CD8-positive, alpha-beta T cell (primary cell): ENCODE measurements at regions of chr14 and their contacts with region 1.

Region 1: DNA sequence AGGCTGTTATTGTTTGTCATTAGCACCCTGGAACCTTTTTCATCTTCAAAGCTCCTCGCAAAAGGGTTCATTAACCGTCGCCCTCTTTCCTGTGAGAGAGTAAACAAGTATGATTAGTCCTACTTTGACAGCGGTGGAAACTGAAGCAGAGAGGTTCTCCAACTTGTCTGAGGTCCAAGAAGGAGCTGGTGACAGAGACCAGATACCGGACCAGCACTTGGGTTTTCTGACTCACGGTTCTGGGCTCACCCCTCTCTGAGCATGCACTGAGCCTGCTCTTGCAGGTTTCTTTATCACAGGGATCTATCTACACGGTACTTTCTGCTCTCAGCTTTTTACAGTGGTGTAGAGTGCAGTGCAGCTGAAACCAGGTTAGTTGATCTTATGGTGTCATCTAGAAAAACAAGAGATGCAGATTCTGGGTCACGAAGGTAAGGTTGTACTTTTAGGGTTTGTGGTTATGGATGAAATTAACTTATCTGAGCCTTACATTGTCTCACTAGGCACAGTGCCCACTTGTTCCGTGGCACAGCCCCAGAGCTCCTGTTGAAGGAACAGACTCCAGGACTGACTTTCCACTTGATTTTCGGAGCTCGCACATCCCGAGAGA is 62.1 kb downstream of the PPP2R5C start:
- DNase-seq: peak in 8 of 9 experiments; percentile 58 to 89 (median 75)
- ATAC-seq: peak; percentile 61
- H3K4me3 ChIP-seq: peak overlapping the region; percentile 60 to 61
- H3K4me3 Mint-ChIP-seq: peak overlapping the region; percentile 92
- H3K27ac ChIP-seq: peak overlapping the region; percentile 82 to 99
- H3K27ac Mint-ChIP-seq: peak overlapping the region; percentile 100
- H3K4me1 ChIP-seq: peaks cover 83% of the 10 kb centered on the region
- H3K4me1 Mint-ChIP-seq: peaks cover 86% of the 10 kb centered on the region
- H3K27me3 ChIP-seq: no peaks in the 10 kb centered on the region
- H3K27me3 Mint-ChIP-seq: no peaks in the 10 kb centered on the region
- CTCF ChIP-seq: no peak

Region 2: DNA sequence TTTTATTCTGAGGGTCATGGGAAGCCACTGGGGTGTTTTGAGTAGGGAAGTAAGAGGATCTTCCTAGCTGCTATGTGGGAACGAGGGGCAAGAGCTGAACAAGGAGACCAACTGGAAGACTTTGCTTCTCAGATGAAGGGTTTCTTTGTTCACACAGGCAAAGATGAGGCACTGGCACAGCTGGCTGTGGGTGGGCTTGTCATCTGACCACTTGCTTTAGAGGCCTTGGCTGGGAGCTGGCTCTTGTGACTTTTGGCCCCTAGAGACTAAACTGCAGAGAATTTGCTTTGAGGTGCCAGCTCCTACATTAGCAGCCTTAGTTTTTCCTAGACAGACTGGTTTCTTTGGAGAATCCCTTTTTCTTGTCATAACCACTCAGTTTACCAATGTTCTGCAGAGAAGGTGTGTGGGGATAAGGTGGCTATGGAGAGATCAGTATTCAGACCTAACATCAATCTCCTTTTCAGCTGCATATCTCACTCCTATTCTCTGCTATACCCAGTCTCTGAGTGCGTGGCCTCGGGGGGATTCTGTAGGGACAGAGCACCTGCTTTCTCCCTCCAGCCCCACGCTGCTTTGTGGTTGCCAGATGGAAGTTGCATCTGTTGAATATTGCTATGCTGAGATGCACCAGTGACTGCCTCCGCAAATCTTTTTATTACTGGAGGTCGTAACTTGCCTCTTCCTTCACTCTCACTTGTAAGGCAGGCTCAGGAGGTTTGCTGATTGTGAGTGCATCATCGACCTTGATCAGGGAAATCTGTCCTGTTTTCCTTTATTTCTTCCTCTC is 49.4 kb before region 1 on chr14:
- CTCF ChIA-PET with region 1: interaction called, 6 read pairs
- POLR2A ChIA-PET with region 1: interaction called, 27 read pairs
- intact Hi-C with region 1: no loop called
- DNase-seq: no peak
- ATAC-seq: no peak
- H3K4me3 ChIP-seq: no peak overlapping the region
- H3K4me3 Mint-ChIP-seq: no peak overlapping the region
- H3K27ac ChIP-seq: no peak overlapping the region
- H3K27ac Mint-ChIP-seq: peak overlapping the region; percentile 58
- H3K4me1 ChIP-seq: no peaks in the 10 kb centered on the region
- H3K4me1 Mint-ChIP-seq: peaks cover 37% of the 10 kb centered on the region
- H3K27me3 ChIP-seq: no peaks in the 10 kb centered on the region
- H3K27me3 Mint-ChIP-seq: no peaks in the 10 kb centered on the region
- CTCF ChIP-seq: no peak

Region 3: DNA sequence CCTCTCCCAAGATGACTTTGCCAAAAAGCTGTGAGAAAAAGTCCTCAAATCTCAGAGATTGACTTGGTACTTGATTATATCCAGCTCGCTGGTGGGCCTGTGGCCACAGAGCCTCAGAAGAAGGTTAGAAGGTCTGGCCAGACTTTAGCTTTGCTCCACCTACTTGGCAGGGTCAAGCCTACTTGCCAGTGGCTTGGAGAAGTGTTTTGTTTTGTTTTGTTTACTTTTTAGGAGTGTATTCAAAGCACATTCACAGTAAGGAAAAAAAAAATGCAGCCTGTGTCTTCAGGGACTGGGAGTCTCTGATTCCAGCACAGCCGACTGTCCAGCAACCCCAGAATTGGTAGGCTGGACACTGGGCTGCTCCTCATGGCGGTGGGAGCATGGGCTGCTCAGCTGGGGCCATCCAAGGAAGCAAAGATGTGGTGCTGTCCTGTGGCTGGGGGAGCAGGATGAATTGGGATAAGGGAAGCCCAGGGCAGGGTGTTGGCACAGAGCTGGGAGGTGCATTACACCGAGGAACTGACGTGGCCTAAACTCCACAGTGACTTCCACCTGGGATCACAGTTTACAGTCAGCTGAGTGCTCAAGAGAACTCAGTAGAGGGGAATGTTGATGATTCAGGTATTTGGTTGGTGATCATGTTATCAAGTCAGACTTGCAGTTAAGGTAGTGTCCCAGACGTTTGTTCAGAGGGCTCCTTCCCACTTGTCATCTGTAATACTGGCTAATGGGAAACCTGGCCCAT is 11.4 kb after region 1 on chr14:
- CTCF ChIA-PET with region 1: interaction called, 6 read pairs
- POLR2A ChIA-PET with region 1: interaction called, 14 read pairs
- intact Hi-C with region 1: loop called in 1 of 2 experiments (anchors 2 kb)
- DNase-seq: no peak
- ATAC-seq: no peak
- H3K4me3 ChIP-seq: no peak overlapping the region
- H3K4me3 Mint-ChIP-seq: peak overlapping the region; percentile 5
- H3K27ac ChIP-seq: peak overlapping the region in 1 of 2 experiments; percentile 49
- H3K27ac Mint-ChIP-seq: peak overlapping the region; percentile 90
- H3K4me1 ChIP-seq: peaks cover 82% of the 10 kb centered on the region
- H3K4me1 Mint-ChIP-seq: peaks cover 85% of the 10 kb centered on the region
- H3K27me3 ChIP-seq: no peaks in the 10 kb centered on the region
- H3K27me3 Mint-ChIP-seq: no peaks in the 10 kb centered on the region
- CTCF ChIP-seq: no peak

Region 4: GRCh38 chr14:101865288-101865687 is 41.7 kb after region 1 on chr14:
- CTCF ChIA-PET with region 1: no interaction called
- POLR2A ChIA-PET with region 1: no interaction called
- intact Hi-C with region 1: no loop called
- DNase-seq: no peak
- ATAC-seq: no peak
- H3K4me3 ChIP-seq: no peak overlapping the region
- H3K4me3 Mint-ChIP-seq: no peak overlapping the region
- H3K27ac ChIP-seq: no peak overlapping the region
- H3K27ac Mint-ChIP-seq: peak overlapping the region; percentile 22
- H3K4me1 ChIP-seq: peaks cover 4% of the 10 kb centered on the region
- H3K4me1 Mint-ChIP-seq: peaks cover 60% of the 10 kb centered on the region
- H3K27me3 ChIP-seq: no peaks in the 10 kb centered on the region
- H3K27me3 Mint-ChIP-seq: no peaks in the 10 kb centered on the region
- CTCF ChIP-seq: no peak

Region 5: GRCh38 chr14:101876555-101876938 is 52.9 kb after region 1 on chr14:
- CTCF ChIA-PET with region 1: no interaction called
- POLR2A ChIA-PET with region 1: interaction called, 4 read pairs
- intact Hi-C with region 1: loop called (anchors 2 kb)
- DNase-seq: peak; percentile 38 to 93 (median 65)
- ATAC-seq: peak; percentile 85
- H3K4me3 ChIP-seq: peak overlapping the region; percentile 13 to 23
- H3K4me3 Mint-ChIP-seq: peak overlapping the region; percentile 78
- H3K27ac ChIP-seq: peak overlapping the region; percentile 45 to 86
- H3K27ac Mint-ChIP-seq: peak overlapping the region; percentile 97
- H3K4me1 ChIP-seq: peaks cover 58% of the 10 kb centered on the region
- H3K4me1 Mint-ChIP-seq: peaks cover 81% of the 10 kb centered on the region
- H3K27me3 ChIP-seq: no peaks in the 10 kb centered on the region
- H3K27me3 Mint-ChIP-seq: no peaks in the 10 kb centered on the region
- CTCF ChIP-seq: no peak

Region 6: GRCh38 chr14:102086972-102087761 is 263.6 kb after region 1 on chr14 and contains the start of gene HSP90AA1:
- CTCF ChIA-PET with region 1: no interaction called
- POLR2A ChIA-PET with region 1: interaction called, 4 read pairs
- intact Hi-C with region 1: loop called in 1 of 2 experiments (anchors 5 kb)
- DNase-seq: peak; percentile 88 to 98 (median 95)
- ATAC-seq: peak; percentile 74
- H3K4me3 ChIP-seq: peak within 1 kb of the TSS; percentile 75 to 78
- H3K4me3 Mint-ChIP-seq: peak within 1 kb of the TSS; percentile 97
- H3K27ac ChIP-seq: peak within 1 kb of the TSS; percentile 96 to 97
- H3K27ac Mint-ChIP-seq: peak within 1 kb of the TSS; percentile 99
- H3K4me1 ChIP-seq: peaks cover 49% of the 10 kb centered on the region
- H3K4me1 Mint-ChIP-seq: peaks cover 58% of the 10 kb centered on the region
- H3K27me3 ChIP-seq: no peaks in the 10 kb centered on the region
- H3K27me3 Mint-ChIP-seq: no peaks in the 10 kb centered on the region
- CTCF ChIP-seq: no peak
- total RNA-seq, gene HSP90AA1: 532 to 539 TPM